ENCODE measurements at regions of chr1 and their contacts with region 1.

Region 1: DNA sequence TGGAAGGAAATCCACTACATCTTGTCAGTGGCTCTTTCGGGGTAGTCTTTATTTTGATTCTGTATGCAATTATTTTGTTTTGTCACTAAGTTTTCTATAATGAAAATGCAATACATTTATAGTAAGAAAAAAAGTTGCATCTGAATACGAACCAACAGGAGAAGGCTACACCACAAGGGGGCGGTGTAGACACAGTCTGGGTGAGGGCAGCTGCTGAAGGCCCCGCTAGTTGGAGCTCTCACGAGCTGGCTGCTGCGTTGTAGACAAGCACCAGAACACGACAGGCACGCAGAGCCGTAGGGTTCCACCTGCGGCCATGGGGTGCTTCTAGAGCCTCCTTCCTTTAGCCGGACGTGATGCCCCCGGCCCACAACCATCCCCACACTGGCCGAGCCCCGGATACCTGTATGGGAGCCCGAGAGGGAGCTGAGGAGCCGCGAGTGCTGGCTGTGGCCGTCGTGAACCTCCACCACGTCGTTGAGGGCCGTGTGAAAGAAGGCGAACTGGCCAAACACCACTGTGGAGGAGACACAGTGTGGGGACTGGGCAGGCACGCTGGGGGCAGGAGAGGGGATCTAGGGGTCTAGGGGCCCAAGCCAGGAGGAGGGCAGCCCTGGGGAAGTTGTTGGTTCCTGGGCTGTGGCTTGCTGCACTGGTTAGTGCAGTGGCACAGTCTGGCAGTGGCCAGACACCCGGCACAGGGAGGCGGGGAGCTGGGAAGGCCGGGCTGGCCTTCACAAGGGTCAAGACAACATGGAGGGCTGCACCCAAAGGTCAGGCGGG is 160.8 kb downstream of the ZSCAN20 start:
- DNase-seq: peak; percentile 51
- H3K4me3 ChIP-seq: no peak overlapping the region
- CTCF ChIP-seq: peak; percentile 100

Region 2: GRCh38 chr1:33654267-33654834 is 21.1 kb after region 1 on chr1:
- CTCF ChIA-PET with region 1: interaction called, 23 read pairs
- POLR2A ChIA-PET with region 1: no interaction called
- DNase-seq: no peak
- H3K4me3 ChIP-seq: no peak overlapping the region
- CTCF ChIP-seq: peak; percentile 77

Region 3: DNA sequence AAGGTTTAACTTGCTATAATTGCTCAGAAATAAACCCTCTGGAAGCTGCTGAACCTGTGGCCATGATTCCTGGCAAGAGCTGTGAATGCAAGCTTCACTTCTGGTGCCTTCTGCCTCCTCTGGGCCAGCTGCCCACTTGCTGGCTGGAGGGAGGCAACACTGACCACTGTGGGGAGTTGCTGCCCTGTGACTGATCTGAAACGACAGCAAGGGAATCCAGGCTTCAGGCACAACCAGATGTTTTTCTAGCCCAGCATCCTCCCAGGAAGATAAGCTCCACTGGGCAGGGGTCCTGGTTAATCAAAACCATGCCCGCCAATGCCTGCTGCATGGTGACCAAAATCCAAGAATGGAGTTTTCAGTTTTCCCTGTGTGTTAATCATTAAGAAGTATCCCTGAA is 50.7 kb after region 1 on chr1:
- CTCF ChIA-PET with region 1: interaction called, 10 read pairs
- POLR2A ChIA-PET with region 1: no interaction called
- DNase-seq: no peak
- H3K4me3 ChIP-seq: no peak overlapping the region
- CTCF ChIP-seq: no peak

Region 4: DNA sequence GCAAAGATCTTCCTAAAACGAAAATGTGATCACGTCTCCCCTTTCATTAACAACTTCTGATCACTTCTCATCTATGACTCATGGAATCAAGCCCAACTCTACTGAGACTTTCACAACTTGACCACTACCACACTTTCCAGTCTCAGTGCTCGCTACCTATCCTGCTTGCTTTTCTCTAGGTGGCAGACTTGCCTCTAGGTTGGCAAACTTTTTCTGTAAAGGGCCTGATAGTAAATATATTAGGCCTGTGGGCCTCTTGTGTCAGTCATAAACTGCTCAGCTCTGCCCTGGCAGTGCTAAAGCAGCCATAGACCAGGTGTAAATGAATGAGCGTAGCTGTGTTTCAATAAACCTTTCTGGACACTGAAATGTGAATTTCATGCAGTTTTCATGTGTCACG is 209.1 kb after region 1 on chr1:
- CTCF ChIA-PET with region 1: no interaction called
- POLR2A ChIA-PET with region 1: no interaction called
- DNase-seq: no peak
- H3K4me3 ChIP-seq: no peak overlapping the region
- CTCF ChIP-seq: no peak

Region 5: GRCh38 chr1:34419663-34420136 is 786.5 kb after region 1 on chr1:
- CTCF ChIA-PET with region 1: interaction called, 12 read pairs
- POLR2A ChIA-PET with region 1: no interaction called
- DNase-seq: no peak
- H3K4me3 ChIP-seq: no peak overlapping the region
- CTCF ChIP-seq: peak; percentile 39

Region 6: GRCh38 chr1:34742667-34743270 is 1109.6 kb after region 1 on chr1:
- CTCF ChIA-PET with region 1: interaction called, 19 read pairs
- POLR2A ChIA-PET with region 1: no interaction called
- DNase-seq: no peak
- H3K4me3 ChIP-seq: no peak overlapping the region
- CTCF ChIP-seq: peak; percentile 99